ENCODE measurements at regions of chr20 and their contacts with region 1.

Region 1: DNA sequence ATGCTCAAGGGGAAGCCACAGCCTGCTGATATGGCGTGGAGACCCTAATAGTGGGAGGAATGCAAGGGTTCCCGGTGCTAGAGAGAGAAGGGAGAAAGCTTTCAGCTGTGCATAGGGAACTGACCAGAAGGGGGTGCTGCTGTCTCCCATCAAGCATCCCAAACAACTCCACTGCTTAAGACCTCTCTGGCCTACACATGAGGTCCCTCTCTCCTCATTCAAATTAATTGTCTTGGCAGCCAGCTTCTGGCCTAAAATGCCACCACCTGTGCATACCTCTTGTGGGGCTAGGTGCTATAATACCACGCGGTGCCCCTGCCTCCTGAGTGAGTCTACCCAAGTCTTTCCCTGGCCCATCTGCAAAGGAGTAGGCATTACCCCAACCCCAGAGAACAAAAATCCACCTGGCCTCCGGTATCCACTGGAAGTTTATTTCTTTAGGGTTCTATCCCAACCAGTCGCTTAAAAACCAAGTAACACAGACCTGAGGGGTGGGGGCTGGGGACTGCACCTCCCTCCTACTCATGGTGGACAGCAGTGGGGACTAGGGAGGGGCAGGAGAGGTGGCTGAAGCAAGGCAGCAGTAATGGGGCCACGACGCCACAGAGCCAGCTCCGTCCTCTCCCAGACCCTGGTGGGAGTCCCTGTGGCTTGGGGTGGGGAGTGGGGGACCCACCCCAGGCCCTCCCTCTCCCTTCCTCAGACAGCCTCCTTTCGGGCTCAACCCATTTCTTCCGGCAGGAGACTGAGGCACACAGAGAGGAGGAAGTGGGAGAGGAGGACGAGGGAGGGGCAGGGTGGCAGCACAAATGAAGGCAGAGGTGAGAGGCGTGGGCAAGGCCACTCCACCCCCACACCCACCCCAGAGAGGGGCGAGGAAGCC is 14.2 kb downstream of the ADISSP start:
- DNase-seq: peak; percentile 51
- H3K4me3 Mint-ChIP-seq: no peak overlapping the region
- H3K27ac Mint-ChIP-seq: no peak overlapping the region
- H3K4me1 Mint-ChIP-seq: peaks cover 6% of the 10 kb centered on the region
- H3K27me3 Mint-ChIP-seq: no peaks in the 10 kb centered on the region

Region 2: GRCh38 chr20:3739054-3739925 is 14.0 kb before region 1 on chr20:
- intact Hi-C with region 1: no loop called
- DNase-seq: no peak
- H3K4me3 Mint-ChIP-seq: no peak overlapping the region
- H3K27ac Mint-ChIP-seq: no peak overlapping the region
- H3K4me1 Mint-ChIP-seq: no peaks in the 10 kb centered on the region
- H3K27me3 Mint-ChIP-seq: peaks cover 8% of the 10 kb centered on the region

Region 3: DNA sequence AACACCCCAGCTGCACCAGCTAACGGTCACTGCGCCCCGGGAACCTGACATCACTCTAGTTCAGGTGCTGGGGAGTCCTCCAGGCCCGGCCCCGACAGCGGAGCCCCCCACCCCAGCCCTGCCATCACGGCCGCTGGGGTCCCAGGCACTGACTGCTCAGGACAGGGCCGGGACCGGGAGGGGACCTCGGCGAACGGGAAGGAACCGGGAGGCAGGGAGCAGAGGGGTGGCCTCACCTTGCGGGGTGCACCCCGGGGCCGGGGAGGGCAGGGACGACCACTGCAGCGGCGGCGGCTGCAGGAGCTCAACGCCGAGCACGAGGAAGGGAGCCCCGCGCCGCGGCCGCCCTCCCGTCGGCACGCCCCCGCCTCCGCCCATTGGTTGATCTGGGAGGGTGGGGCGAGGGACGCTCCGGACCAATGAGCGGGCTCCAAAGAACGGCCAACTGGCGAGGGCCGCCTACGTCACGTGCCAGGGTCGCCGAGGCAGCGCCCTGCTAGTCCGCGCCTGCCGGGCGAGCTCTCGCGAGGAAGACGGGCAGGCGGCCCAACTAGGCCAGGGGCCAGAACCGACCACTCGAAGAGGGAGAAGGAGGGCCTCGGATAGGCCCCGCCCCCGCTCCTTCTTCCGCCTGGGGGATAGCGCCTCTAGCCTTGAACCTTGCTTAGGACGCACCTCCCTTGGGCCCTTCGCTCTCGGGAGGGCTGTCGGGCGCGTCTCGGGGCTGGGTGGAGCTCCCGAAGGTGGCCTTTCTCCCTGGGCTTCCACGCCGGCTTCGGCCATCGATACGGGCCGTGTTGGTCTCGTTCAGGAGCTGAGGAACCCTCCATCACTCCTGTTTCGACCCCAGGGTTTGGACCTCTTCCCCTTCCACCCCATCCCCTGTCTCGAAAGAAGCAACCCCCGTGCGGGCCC is 14.3 kb after region 1 on chr20 and contains the start of gene ADISSP:
- intact Hi-C with region 1: loop called (anchors 2 kb)
- DNase-seq: peak; percentile 97
- H3K4me3 Mint-ChIP-seq: peak within 1 kb of the TSS; percentile 86
- H3K27ac Mint-ChIP-seq: peak within 1 kb of the TSS; percentile 94
- H3K4me1 Mint-ChIP-seq: peaks cover 21% of the 10 kb centered on the region
- H3K27me3 Mint-ChIP-seq: peaks cover 3% of the 10 kb centered on the region
- total RNA-seq, gene ADISSP: 55.8 and 56.3 TPM in 2 replicates

Region 4: GRCh38 chr20:3854462-3854871 is 101.1 kb after region 1 on chr20:
- intact Hi-C with region 1: loop called (anchors 1 kb)
- DNase-seq: no peak
- H3K4me3 Mint-ChIP-seq: no peak overlapping the region
- H3K27ac Mint-ChIP-seq: no peak overlapping the region
- H3K4me1 Mint-ChIP-seq: peaks cover 5% of the 10 kb centered on the region
- H3K27me3 Mint-ChIP-seq: no peaks in the 10 kb centered on the region

Region 5: DNA sequence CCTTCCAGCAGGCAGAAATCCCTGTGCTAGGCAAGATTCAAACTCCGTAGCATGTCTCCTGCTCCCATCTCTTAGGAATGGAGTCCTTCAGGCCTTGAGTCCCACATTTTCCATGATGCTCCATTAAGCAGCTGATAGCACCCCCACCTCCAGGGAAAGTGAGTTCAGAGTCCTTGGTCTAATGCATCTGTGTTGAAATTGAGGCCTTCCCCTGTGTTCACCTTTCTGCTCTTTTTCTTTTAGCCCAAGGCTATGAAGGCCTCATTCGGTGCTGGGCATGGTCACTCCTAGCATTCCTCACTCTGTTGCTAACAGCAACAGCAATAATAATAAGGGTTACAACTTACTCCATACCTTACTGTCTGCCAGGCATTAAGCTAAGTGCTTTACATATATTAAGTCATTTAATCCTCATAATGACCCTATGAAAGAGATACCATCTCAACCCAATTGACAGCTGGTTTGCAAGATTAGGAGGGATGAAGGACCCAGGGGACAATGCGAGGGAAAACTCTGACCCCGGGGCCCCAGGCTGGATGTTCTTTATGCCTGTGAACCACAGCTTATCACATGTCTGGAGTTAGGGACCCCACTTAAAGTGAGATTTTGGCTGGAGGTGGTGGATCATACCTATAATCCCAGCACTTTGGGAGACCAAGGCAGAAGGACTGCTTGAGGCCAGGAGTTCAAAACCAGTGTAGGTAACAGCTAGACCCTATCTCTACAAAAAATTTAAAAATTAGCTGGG is 118.4 kb after region 1 on chr20:
- intact Hi-C with region 1: no loop called
- DNase-seq: no peak
- H3K4me3 Mint-ChIP-seq: no peak overlapping the region
- H3K27ac Mint-ChIP-seq: no peak overlapping the region
- H3K4me1 Mint-ChIP-seq: peaks cover 7% of the 10 kb centered on the region
- H3K27me3 Mint-ChIP-seq: no peaks in the 10 kb centered on the region